ENCODE measurements at regions of chr10 and their contacts with region 1.

Region 1: GRCh38 chr10:122565728-122566206 is 5.2 kb downstream of the DMBT1 start:
- DNase-seq: peak in 1 of 2 experiments; percentile 62
- H3K4me3 ChIP-seq: no peak overlapping the region
- H3K27ac ChIP-seq: no peak overlapping the region
- H3K4me1 ChIP-seq: no peaks in the 10 kb centered on the region
- H3K27me3 ChIP-seq: 0 out of 2 replicates have a peak, but pooled peaks cover 4% of the 10 kb centered on the region
- CTCF ChIP-seq: peak; percentile 77

Region 2: DNA sequence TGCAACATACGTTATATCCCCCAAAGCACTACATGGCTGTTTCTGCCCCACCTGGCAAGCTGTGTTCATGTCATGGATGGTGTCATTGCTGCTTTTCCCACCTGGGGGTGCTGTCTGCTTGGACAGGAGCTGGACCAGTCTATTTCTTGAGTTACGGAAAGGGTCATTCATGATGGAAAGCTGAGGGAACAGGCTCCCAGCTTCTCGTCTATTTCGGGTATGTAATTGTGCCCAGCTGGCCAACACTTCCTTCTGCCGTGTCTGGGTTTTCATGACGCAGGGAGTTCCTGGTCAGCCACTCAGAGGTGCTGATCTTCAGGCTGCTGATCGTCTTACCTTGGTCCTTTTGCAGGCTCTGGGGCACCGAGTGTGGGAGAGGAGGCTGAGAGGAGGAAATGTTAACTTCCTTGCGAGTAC is 286.0 kb before region 1 on chr10:
- CTCF ChIA-PET with region 1: interaction called, 5 read pairs
- POLR2A ChIA-PET with region 1: no interaction called
- intact Hi-C with region 1: loop called (anchors 5 kb)
- DNase-seq: peak in 1 of 2 experiments; percentile 64
- H3K4me3 ChIP-seq: no peak overlapping the region
- H3K27ac ChIP-seq: no peak overlapping the region
- H3K4me1 ChIP-seq: no peaks in the 10 kb centered on the region
- H3K27me3 ChIP-seq: no peaks in the 10 kb centered on the region
- CTCF ChIP-seq: peak; percentile 71

Region 3: DNA sequence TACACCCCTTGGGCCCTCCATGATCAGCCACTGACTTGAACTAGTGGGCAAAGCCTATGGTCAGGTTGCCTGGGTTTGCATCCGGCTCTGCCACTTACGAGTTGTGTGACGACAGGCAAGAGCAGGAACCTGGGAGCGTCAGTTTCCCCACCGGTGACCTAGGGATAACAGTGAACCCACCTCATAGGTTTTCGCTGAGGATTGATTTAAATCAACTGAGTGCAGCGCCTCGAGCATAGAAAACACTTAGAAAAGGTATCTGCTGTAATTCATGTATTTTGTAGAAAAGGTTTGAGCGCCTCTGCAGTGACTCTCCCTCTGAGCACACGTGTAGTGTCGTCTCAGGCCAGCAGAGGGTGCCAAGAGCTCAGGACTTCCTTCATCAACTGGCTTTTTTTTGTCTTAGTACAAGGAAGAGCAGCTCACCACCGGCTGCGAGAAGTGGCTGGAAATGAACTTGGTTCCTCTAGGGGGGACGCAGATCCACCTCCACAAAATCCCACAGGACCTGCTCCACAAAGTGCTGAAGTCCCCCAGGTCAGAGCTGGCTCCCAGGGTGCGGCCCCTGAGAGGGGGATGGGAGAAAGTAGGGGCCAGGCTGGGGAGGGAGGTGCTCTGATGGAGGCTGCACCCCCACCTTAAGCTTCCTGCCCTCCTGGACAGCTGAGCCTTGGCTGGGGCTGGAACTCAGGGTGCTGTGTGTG is 267.0 kb before region 1 on chr10:
- CTCF ChIA-PET with region 1: interaction called, 10 read pairs
- POLR2A ChIA-PET with region 1: interaction called, 3 read pairs
- intact Hi-C with region 1: loop called (anchors 1 kb)
- DNase-seq: peak; percentile 56 to 65
- H3K4me3 ChIP-seq: no peak overlapping the region; the same call in 1 of the 2 replicates
- H3K27ac ChIP-seq: no peak overlapping the region
- H3K4me1 ChIP-seq: peaks cover 19% of the 10 kb centered on the region
- H3K27me3 ChIP-seq: no peaks in the 10 kb centered on the region
- CTCF ChIP-seq: peak; percentile 84

Region 4: DNA sequence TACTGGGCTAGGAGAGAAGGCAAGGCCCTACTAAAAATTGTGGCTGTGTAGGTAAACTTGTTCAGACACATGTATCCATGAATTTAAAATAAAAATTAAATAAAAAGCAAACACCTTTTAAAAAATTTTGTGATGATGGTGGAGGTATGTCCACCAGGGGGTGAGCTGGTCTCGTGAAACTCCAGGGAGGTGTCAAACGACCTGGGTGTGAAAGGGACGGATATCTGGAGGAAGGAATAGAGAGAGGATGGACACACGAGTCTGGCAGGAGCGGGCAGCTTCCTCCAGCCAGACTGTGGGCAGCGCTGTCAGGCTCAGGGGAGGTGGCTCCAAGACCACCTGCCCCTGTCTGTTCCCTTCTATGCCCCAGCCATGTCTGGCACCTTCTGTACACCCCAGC is 40.0 kb before region 1 on chr10:
- CTCF ChIA-PET with region 1: interaction called, 7 read pairs
- POLR2A ChIA-PET with region 1: no interaction called
- intact Hi-C with region 1: loop called (anchors 1 kb)
- DNase-seq: peak in 1 of 2 experiments; percentile 27
- H3K4me3 ChIP-seq: no peak overlapping the region
- H3K27ac ChIP-seq: no peak overlapping the region
- H3K4me1 ChIP-seq: no peaks in the 10 kb centered on the region
- H3K27me3 ChIP-seq: peaks cover 8% of the 10 kb centered on the region; the same call in 1 of the 2 replicates
- CTCF ChIP-seq: peak; percentile 59

Region 5: GRCh38 chr10:122590153-122590552 is 24.4 kb after region 1 on chr10:
- CTCF ChIA-PET with region 1: no interaction called
- POLR2A ChIA-PET with region 1: no interaction called
- intact Hi-C with region 1: no loop called
- DNase-seq: no peak
- H3K4me3 ChIP-seq: no peak overlapping the region
- H3K27ac ChIP-seq: no peak overlapping the region
- H3K4me1 ChIP-seq: no peaks in the 10 kb centered on the region
- H3K27me3 ChIP-seq: no peaks in the 10 kb centered on the region
- CTCF ChIP-seq: no peak

Region 6: DNA sequence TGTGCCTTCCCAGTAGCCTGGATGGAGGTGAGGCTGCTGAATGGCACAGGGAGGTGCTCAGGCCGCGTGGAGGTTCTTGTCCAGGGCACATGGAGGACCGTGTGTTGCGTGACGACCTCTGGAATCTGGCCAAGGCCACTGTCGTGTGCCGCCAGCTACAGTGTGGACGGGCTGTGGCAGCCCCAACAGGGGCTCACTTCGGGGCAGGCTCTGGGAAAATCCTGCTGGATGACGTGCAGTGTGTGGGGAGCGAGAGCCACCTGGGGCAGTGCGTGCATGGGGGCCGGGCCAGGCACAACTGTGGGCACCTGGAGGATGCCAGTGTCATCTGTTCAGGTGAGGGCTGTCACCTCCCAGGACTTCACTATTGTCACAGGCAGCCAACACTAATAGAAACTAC is 184.1 kb after region 1 on chr10:
- CTCF ChIA-PET with region 1: no interaction called
- POLR2A ChIA-PET with region 1: no interaction called
- intact Hi-C with region 1: no loop called
- DNase-seq: no peak
- H3K4me3 ChIP-seq: no peak overlapping the region
- H3K27ac ChIP-seq: no peak overlapping the region
- H3K4me1 ChIP-seq: no peaks in the 10 kb centered on the region
- H3K27me3 ChIP-seq: peaks cover 15% of the 10 kb centered on the region
- CTCF ChIP-seq: no peak

Measured in PC-9 (cell line).